A673 (cell line): ENCODE measurements at regions of chr10 and their contacts with region 1.

Region 1: DNA sequence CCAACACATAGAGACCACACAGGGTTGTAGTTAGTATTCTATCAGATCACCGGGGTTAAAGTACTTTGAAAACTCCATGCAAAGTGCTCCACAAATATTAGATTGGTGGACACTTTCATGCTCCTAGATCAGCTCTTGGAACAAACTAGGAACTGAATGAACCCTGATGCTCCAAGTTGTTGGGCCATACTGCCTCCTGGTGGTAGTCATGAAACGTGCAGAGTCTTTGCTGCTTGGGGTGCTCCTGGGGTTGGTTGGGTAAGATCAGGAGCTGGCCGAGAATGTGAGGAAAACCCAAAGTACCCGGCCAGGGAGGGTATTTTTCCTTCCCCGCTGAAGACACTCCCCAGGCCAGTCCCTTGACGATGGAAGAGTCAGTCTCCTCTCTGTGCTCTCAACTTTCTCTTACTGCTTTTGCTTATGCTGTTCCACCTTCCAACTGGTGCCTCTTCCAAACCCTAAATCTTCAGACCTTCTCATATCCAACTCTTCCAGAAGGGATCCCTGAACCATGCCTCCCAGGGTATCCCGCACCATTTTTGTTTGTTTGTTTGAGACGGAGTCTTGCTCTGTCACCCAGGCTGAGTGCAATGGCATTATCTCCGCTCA is 920 bp upstream of the RPEL1 start:
- DNase-seq: peak; percentile 82
- H3K4me3 ChIP-seq: no peak overlapping the region
- H3K27ac ChIP-seq: no peak overlapping the region
- H3K4me1 ChIP-seq: no peaks in the 10 kb centered on the region
- H3K27me3 ChIP-seq: no peaks in the 10 kb centered on the region
- CTCF ChIP-seq: peak; percentile 86

Region 2: GRCh38 chr10:103069453-103070331 is 175.1 kb before region 1 on chr10:
- CTCF ChIA-PET with region 1: no interaction called
- POLR2A ChIA-PET with region 1: no interaction called
- intact Hi-C with region 1: loop called (anchors 5 kb)
- DNase-seq: peak; percentile 56
- H3K4me3 ChIP-seq: no peak overlapping the region
- H3K27ac ChIP-seq: no peak overlapping the region
- H3K4me1 ChIP-seq: no peaks in the 10 kb centered on the region
- H3K27me3 ChIP-seq: no peaks in the 10 kb centered on the region
- CTCF ChIP-seq: peak; percentile 73

Region 3: DNA sequence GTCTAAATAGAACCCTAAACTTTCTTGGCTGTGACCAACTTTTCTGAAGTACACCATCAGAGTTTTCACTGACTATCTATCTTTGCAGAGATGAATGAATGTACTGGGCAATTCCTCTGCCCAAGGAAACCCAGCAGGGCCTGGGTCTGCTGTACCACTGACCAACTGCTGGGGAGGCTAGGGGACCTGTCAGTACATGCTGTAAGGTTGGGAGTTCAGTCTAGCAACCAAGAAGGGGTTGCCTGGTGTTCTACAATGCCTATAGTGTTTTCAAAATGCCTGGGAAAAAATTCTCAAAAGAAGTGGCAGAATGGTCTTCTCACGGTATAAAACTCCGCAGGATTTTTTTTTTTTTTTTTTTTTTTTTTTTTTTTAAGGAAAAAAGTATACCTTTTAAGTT is 158.0 kb before region 1 on chr10:
- CTCF ChIA-PET with region 1: interaction called, 4 read pairs
- POLR2A ChIA-PET with region 1: no interaction called
- intact Hi-C with region 1: loop called (anchors 5 kb)
- DNase-seq: no peak
- H3K4me3 ChIP-seq: no peak overlapping the region
- H3K27ac ChIP-seq: no peak overlapping the region
- H3K4me1 ChIP-seq: no peaks in the 10 kb centered on the region
- H3K27me3 ChIP-seq: no peaks in the 10 kb centered on the region
- CTCF ChIP-seq: no peak

Region 4: DNA sequence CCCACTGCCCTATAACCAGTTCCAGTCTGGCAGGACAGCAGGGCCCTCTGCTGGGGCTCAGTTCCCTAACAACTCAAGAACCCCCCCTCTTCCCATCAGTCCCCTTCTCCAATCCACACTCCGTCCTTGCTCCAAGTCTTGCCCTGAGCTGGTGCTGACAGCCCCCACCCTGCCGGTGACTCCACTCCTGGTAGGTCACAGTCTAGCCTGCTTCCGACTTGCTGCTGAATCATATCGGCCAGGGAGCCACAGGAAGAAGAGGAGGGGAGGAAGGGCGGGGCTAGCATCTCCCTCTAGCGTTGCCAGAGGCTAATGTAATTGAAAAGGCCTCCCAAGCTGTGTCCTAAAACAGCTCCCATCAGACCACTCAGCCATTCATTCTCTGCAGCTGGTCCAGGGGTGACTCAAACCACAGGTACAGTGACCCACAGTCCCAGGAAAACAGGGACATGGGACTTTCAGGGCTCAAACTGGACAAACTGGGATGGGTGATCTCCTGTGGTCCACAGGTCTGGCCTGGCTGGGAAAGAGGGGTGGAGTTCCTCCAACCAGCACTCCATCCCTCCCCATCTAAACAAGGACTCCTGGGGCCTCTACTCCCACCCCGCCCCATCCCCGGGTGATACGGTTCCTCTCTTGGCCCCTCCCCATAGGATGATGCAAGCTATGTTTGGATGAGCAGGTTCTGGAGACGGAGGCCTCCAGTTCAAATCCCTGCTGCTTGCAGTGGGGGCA is 451.8 kb after region 1 on chr10:
- CTCF ChIA-PET with region 1: no interaction called
- POLR2A ChIA-PET with region 1: no interaction called
- intact Hi-C with region 1: no loop called
- DNase-seq: peak; percentile 82
- H3K4me3 ChIP-seq: no peak overlapping the region
- H3K27ac ChIP-seq: peak overlapping the region; percentile 56
- H3K4me1 ChIP-seq: peaks cover 31% of the 10 kb centered on the region
- H3K27me3 ChIP-seq: no peaks in the 10 kb centered on the region
- CTCF ChIP-seq: peak; percentile 48